Calu3 (cell line): ENCODE measurements at regions of chr1 and their contacts with region 1.

Region 1: DNA sequence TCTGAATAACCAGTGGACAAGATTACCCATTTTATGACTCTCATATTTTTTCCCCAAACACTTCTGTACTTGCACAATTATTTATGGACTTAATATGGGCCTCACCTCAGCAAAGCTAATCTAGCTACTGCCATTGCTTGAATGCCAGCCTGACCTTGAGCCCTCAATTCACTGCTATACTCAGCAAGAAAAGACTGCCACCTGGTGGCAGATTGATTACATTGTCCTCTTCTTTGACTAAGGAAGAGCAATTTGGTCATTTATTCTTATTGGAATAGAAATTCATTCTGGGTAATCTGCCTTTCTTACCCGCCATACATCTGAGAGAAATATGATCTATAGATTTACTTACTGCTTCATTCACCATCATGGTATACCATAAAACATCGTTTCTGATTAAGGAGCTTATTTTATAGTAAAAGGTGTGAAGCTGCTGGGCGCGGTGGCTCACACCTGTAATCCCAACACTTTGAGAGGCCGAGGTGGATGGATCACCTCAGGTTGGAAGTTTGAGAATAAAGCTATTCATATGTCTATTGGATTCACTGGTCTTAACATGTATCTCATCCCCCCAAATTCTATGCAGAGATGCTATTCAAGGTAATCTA is 32.9 kb upstream of the DIPK1A start:
- DNase-seq: peak; percentile 62
- H3K4me3 Mint-ChIP-seq: no peak overlapping the region
- H3K27ac Mint-ChIP-seq: no peak overlapping the region
- H3K4me1 Mint-ChIP-seq: peaks cover 19% of the 10 kb centered on the region
- H3K27me3 Mint-ChIP-seq: no peaks in the 10 kb centered on the region
- CTCF ChIP-seq: peak; percentile 72

Region 2: GRCh38 chr1:92960395-92961130 is 33.6 kb before region 1 on chr1:
- CTCF ChIA-PET with region 1: interaction called, 9 read pairs
- intact Hi-C with region 1: loop called (anchors 2 kb)
- DNase-seq: peak; percentile 64
- H3K4me3 Mint-ChIP-seq: peak overlapping the region; percentile 70
- H3K27ac Mint-ChIP-seq: peak overlapping the region; percentile 31
- H3K4me1 Mint-ChIP-seq: peaks cover 8% of the 10 kb centered on the region
- H3K27me3 Mint-ChIP-seq: no peaks in the 10 kb centered on the region
- CTCF ChIP-seq: peak; percentile 47

Region 3: DNA sequence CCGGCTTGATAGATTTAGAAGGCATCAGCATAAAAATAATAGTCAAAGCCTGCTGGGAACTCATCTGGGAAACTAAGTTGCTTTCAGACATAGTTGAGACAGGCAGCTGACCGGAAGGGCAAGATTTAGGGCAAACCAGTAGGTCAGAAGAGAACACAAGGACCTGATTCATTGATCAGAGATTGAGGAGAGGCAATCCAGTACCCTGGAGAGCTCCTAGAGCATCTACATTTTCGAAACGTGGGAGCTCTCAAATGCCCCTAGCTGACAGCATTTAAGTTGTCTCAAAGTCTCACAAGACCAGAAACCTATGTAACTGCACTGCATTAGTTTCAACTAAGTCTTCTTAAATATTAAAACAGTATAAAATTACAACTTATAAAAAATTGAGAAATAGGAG is 62.0 kb after region 1 on chr1:
- CTCF ChIA-PET with region 1: no interaction called
- intact Hi-C with region 1: no loop called
- DNase-seq: peak; percentile 21
- H3K4me3 Mint-ChIP-seq: no peak overlapping the region
- H3K27ac Mint-ChIP-seq: no peak overlapping the region
- H3K4me1 Mint-ChIP-seq: no peaks in the 10 kb centered on the region
- H3K27me3 Mint-ChIP-seq: peaks cover 37% of the 10 kb centered on the region
- CTCF ChIP-seq: no peak